ENCODE measurements at regions of chr10 and their contacts with region 1.

Region 1: DNA sequence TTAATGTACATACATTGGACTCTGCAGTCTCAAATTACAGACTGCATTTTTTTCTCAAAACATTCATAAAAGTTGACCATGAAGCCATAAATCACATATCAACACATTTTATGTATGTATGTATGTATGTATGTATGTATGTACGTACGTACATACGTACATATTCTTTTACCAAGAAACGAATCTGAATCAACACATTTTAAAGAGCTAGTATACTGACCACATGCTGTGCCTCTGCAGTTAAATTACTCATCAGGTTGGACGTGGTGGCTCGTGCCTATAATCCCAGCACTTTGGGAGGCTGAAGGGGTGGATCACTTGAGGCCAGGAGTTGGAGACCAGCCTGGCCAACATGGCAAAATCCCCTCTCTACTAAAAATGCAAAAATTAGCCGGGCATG is 105.8 kb downstream of the GPR158 start:
- DNase-seq: no peak
- H3K4me3 ChIP-seq: no peak overlapping the region
- H3K27ac ChIP-seq: no peak overlapping the region
- H3K4me1 ChIP-seq: no peaks in the 10 kb centered on the region
- H3K27me3 ChIP-seq: no peaks in the 10 kb centered on the region
- CTCF ChIP-seq: no peak
- POLR2A ChIP-seq: no peak

Region 2: DNA sequence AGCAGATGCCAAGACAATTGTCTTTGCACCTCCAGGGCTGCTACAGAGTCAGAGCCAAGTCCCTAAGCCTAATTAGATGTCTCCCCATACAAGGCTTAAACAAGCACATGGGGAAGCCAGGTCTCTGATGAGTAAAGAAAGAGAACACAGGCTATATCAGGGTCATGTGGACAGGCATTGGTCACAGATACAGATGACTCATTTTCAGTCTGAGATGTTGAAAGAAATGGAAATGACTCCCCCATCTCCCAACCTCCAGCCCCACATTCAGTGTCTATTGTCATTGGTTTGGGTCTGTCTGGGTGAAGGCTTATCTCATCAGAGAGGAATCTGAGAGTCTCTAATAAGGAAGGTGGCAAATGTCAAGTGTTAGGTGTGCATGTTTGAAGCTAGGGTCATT is 1361.8 kb before region 1 on chr10:
- intact Hi-C with region 1: loop called (anchors 5 kb)
- DNase-seq: no peak
- H3K4me3 ChIP-seq: no peak overlapping the region
- H3K27ac ChIP-seq: no peak overlapping the region
- H3K4me1 ChIP-seq: no peaks in the 10 kb centered on the region
- H3K27me3 ChIP-seq: no peaks in the 10 kb centered on the region
- CTCF ChIP-seq: no peak
- POLR2A ChIP-seq: no peak

Region 3: DNA sequence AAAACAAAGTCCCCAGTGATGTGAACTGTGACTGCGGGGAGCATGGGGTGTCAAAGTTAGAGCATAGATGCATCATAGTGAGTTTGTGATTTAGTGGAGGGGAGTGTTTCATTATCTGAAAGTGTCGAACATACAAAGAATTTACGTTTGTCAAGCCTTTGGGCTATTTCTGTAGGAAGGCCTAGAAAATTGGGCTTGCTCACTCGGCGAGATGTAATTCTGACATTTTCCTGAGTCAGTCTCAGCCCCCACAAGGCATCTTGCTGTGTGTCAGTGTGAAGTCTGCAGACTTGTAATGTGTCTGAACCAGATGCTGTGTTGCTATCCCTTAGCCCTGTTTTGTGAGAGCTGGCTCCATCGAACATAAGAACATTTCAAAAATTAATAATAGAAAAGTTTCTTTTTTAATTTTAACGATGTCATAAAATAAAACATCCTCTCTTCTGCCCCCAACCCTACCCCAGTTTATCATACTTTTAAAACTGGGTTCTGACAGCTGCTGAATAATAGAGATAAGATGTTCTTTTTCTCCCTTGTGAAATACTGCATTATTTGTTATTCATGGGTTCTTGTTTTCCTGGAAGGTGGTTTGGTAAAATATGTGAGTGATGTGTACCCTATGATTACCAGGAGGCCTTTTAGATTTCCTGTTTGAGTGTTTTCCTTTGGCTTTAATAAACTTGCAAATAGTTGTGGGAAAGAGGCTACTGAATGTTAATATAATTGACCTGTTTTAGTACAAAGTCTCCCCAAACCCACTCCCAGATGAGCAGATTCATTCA is 101.6 kb after region 1 on chr10:
- intact Hi-C with region 1: no loop called
- DNase-seq: no peak
- H3K4me3 ChIP-seq: no peak overlapping the region
- H3K27ac ChIP-seq: no peak overlapping the region
- H3K4me1 ChIP-seq: no peaks in the 10 kb centered on the region
- H3K27me3 ChIP-seq: no peaks in the 10 kb centered on the region
- CTCF ChIP-seq: no peak
- POLR2A ChIP-seq: no peak

Region 4: GRCh38 chr10:25678666-25679065 is 398.1 kb after region 1 on chr10:
- intact Hi-C with region 1: no loop called
- DNase-seq: no peak
- H3K4me3 ChIP-seq: no peak overlapping the region
- H3K27ac ChIP-seq: no peak overlapping the region
- H3K4me1 ChIP-seq: no peaks in the 10 kb centered on the region
- H3K27me3 ChIP-seq: no peaks in the 10 kb centered on the region
- CTCF ChIP-seq: no peak
- POLR2A ChIP-seq: no peak